Caco-2 (cell line): ENCODE measurements at regions of chr2 and their contacts with region 1.

Region 1: GRCh38 chr2:42169100-42169873 is at the start of gene EML4:
- DNase-seq: peak; percentile 94 to 97
- H3K4me3 ChIP-seq: peak within 1 kb of the TSS; percentile 89
- H3K4me3 Mint-ChIP-seq: no peak within 1 kb of the TSS
- H3K27ac Mint-ChIP-seq: peak within 1 kb of the TSS; percentile 39
- H3K4me1 ChIP-seq: peaks cover 29% of the 10 kb centered on the region
- H3K4me1 Mint-ChIP-seq: peaks cover 24% of the 10 kb centered on the region
- H3K27me3 ChIP-seq: no peaks in the 10 kb centered on the region
- H3K27me3 Mint-ChIP-seq: no peaks in the 10 kb centered on the region
- CTCF ChIP-seq: no peak
- total RNA-seq, gene EML4: 122 and 125 TPM in 2 replicates

Region 2: GRCh38 chr2:41782306-41783158 is 386.8 kb before region 1 on chr2:
- CTCF ChIA-PET with region 1: no interaction called
- POLR2A ChIA-PET with region 1: no interaction called
- intact Hi-C with region 1: no loop called
- DNase-seq: peak in 1 of 2 experiments; percentile 61
- H3K4me3 ChIP-seq: no peak overlapping the region
- H3K4me3 Mint-ChIP-seq: no peak overlapping the region
- H3K27ac Mint-ChIP-seq: no peak overlapping the region
- H3K4me1 ChIP-seq: no peaks in the 10 kb centered on the region
- H3K4me1 Mint-ChIP-seq: peaks cover 6% of the 10 kb centered on the region
- H3K27me3 ChIP-seq: no peaks in the 10 kb centered on the region; the same call in none of the 2 replicates
- H3K27me3 Mint-ChIP-seq: peaks cover 11% of the 10 kb centered on the region
- CTCF ChIP-seq: peak; percentile 78 to 92

Region 3: DNA sequence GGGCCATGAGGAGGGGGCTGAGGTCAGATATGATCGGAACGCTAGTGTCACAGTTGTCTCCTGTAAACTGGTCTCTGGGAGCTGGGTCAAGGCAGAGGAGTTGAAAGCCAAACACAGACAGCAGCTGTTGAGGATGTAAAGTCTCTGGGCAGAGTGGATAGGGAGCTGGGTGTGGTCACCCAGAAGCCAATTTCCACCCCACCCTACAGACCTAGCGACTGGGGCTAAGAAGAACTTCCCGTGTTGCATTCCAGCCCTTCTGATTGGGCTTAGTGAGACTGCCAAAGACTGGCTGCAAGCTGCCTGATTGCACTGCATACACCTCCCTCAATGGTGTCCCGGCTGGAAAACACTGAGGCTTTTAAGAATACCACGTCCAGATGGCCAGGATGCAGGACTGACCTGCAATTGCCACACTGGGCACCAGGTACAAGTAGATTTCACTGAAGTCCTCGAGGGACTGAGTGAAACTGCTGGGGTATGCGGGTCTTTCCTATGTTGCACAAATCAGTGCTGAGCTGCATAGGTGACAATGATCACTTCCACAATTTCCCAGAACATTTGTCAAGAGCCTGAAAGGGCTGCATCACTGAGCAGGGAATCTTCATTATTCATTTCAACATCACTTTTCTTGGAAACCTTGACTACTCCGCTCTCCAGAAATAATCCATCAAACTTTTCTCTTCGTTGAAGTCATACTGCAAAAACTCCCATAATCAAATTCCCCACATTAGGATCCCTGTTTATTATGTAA is 43.3 kb before region 1 on chr2:
- CTCF ChIA-PET with region 1: interaction called, 11 read pairs
- POLR2A ChIA-PET with region 1: no interaction called
- intact Hi-C with region 1: loop called (anchors 5 kb)
- DNase-seq: peak in 1 of 2 experiments; percentile 48
- H3K4me3 ChIP-seq: no peak overlapping the region
- H3K4me3 Mint-ChIP-seq: no peak overlapping the region
- H3K27ac Mint-ChIP-seq: no peak overlapping the region
- H3K4me1 ChIP-seq: peaks cover 29% of the 10 kb centered on the region
- H3K4me1 Mint-ChIP-seq: peaks cover 30% of the 10 kb centered on the region
- H3K27me3 ChIP-seq: no peaks in the 10 kb centered on the region
- H3K27me3 Mint-ChIP-seq: no peaks in the 10 kb centered on the region
- CTCF ChIP-seq: no peak

Region 4: GRCh38 chr2:42132966-42133641 is 36.2 kb before region 1 on chr2:
- CTCF ChIA-PET with region 1: no interaction called
- POLR2A ChIA-PET with region 1: interaction called, 4 read pairs
- intact Hi-C with region 1: loop called (anchors 5 kb)
- DNase-seq: peak; percentile 87 to 88
- H3K4me3 ChIP-seq: peak overlapping the region; percentile 1; the same call in 1 of the 2 replicates
- H3K4me3 Mint-ChIP-seq: peak overlapping the region; percentile 59
- H3K27ac Mint-ChIP-seq: peak overlapping the region; percentile 84
- H3K4me1 ChIP-seq: peaks cover 56% of the 10 kb centered on the region
- H3K4me1 Mint-ChIP-seq: peaks cover 53% of the 10 kb centered on the region
- H3K27me3 ChIP-seq: no peaks in the 10 kb centered on the region
- H3K27me3 Mint-ChIP-seq: no peaks in the 10 kb centered on the region
- CTCF ChIP-seq: no peak

Region 5: DNA sequence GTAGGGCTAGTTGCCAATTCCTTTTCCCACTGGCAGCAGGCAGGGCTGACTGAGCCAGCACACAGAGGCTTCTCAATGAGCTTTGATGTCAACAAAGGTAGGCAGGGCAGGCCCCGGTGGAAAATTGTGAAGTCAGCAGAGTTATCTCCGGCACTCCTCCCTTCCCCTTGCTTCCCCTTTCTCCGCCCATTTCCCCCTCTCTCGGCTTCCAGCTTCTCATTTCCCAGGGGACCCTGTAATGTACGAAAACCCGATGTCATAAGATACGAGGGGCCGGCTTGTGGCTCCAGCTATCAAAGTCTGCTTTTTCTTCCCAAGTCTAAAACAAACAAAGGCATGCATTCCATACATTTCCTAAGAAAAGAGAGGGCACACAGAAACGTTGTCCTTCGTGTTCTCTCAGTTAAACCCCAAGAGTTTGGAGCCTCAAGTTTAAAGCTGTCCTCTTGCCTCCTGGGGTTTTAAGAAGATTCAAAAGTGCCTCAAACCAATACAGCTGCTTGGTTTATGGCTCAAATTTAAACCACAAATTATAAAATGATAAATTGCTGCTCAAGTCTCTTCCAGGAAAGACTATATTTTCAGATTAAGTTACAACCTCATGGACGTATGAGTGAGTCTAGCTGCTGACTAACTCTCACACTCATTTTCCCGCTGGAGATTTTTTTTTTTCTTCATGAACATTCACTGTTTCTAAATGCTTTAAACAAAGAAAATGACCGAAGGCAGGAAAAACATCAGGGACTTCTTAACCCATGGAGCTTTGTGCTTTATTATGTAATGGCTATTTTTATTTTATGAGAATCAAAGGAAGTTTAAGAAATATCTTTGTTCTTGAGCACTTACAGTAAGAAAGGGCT is 27.4 kb before region 1 on chr2:
- CTCF ChIA-PET with region 1: no interaction called
- POLR2A ChIA-PET with region 1: interaction called, 8 read pairs
- intact Hi-C with region 1: loop called (anchors 1 kb)
- DNase-seq: peak; percentile 91 to 96
- H3K4me3 ChIP-seq: peak overlapping the region; percentile 17
- H3K4me3 Mint-ChIP-seq: peak overlapping the region; percentile 71
- H3K27ac Mint-ChIP-seq: peak overlapping the region; percentile 95
- H3K4me1 ChIP-seq: peaks cover 53% of the 10 kb centered on the region
- H3K4me1 Mint-ChIP-seq: peaks cover 55% of the 10 kb centered on the region
- H3K27me3 ChIP-seq: no peaks in the 10 kb centered on the region
- H3K27me3 Mint-ChIP-seq: no peaks in the 10 kb centered on the region
- CTCF ChIP-seq: no peak

Region 6: DNA sequence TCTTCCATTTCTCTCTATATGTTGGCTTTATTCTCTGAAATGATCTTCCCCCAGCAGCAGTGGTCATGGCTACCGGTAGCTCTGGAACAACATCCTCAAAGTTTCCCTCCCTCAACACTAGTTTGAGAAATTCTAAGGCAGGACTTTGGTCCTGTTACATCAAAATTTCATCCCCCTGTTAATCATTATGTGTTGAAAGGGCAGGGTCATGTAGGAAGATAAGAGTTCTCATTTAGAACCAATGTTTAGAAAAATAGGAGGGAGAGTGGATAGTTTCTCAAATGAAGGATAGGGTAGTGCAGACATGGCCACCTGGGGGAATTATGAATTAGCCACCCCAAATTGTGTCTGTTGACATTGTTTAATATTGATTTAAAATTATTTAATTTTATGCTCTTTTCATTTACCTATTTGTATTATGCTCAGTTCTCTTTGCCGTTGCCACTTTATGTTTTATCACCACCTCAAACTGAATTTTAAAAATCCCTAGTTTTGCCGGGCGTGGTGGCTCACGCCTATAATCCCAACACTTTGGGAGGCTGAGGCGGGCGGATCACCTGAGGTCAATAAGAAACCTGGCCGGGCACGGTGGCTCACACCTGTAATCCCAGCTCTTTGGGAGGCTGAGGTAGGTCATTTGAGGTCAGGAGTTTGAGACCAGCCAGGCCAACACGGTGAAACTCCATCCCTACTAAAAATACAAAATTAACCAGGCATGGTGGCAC is 22.2 kb after region 1 on chr2:
- CTCF ChIA-PET with region 1: interaction called, 4 read pairs
- POLR2A ChIA-PET with region 1: interaction called, 3 read pairs
- intact Hi-C with region 1: loop called (anchors 1 kb)
- DNase-seq: peak; percentile 47 to 82
- H3K4me3 ChIP-seq: no peak overlapping the region
- H3K4me3 Mint-ChIP-seq: peak overlapping the region; percentile 65
- H3K27ac Mint-ChIP-seq: peak overlapping the region; percentile 77
- H3K4me1 ChIP-seq: peaks cover 84% of the 10 kb centered on the region
- H3K4me1 Mint-ChIP-seq: peaks cover 52% of the 10 kb centered on the region
- H3K27me3 ChIP-seq: no peaks in the 10 kb centered on the region
- H3K27me3 Mint-ChIP-seq: no peaks in the 10 kb centered on the region
- CTCF ChIP-seq: no peak

Region 7: GRCh38 chr2:42196403-42197267 is 27.3 kb after region 1 on chr2:
- CTCF ChIA-PET with region 1: interaction called, 4 read pairs
- POLR2A ChIA-PET with region 1: interaction called, 3 read pairs
- intact Hi-C with region 1: loop called (anchors 1 kb)
- DNase-seq: peak; percentile 68 to 77
- H3K4me3 ChIP-seq: no peak overlapping the region
- H3K4me3 Mint-ChIP-seq: peak overlapping the region; percentile 7
- H3K27ac Mint-ChIP-seq: peak overlapping the region; percentile 10
- H3K4me1 ChIP-seq: peaks cover 51% of the 10 kb centered on the region
- H3K4me1 Mint-ChIP-seq: peaks cover 56% of the 10 kb centered on the region
- H3K27me3 ChIP-seq: no peaks in the 10 kb centered on the region
- H3K27me3 Mint-ChIP-seq: no peaks in the 10 kb centered on the region
- CTCF ChIP-seq: peak; percentile 65 to 85

Region 8: GRCh38 chr2:42238644-42239288 is 69.5 kb after region 1 on chr2:
- CTCF ChIA-PET with region 1: interaction called, 3 read pairs
- POLR2A ChIA-PET with region 1: no interaction called
- intact Hi-C with region 1: loop called (anchors 2 kb)
- DNase-seq: peak; percentile 75 to 78
- H3K4me3 ChIP-seq: no peak overlapping the region
- H3K4me3 Mint-ChIP-seq: no peak overlapping the region
- H3K27ac Mint-ChIP-seq: no peak overlapping the region
- H3K4me1 ChIP-seq: peaks cover 33% of the 10 kb centered on the region
- H3K4me1 Mint-ChIP-seq: peaks cover 49% of the 10 kb centered on the region
- H3K27me3 ChIP-seq: no peaks in the 10 kb centered on the region
- H3K27me3 Mint-ChIP-seq: no peaks in the 10 kb centered on the region
- CTCF ChIP-seq: peak; percentile 51 to 55